KBM-7 (cell line): ENCODE measurements at regions of chr1 and their contacts with region 1.

Region 1: DNA sequence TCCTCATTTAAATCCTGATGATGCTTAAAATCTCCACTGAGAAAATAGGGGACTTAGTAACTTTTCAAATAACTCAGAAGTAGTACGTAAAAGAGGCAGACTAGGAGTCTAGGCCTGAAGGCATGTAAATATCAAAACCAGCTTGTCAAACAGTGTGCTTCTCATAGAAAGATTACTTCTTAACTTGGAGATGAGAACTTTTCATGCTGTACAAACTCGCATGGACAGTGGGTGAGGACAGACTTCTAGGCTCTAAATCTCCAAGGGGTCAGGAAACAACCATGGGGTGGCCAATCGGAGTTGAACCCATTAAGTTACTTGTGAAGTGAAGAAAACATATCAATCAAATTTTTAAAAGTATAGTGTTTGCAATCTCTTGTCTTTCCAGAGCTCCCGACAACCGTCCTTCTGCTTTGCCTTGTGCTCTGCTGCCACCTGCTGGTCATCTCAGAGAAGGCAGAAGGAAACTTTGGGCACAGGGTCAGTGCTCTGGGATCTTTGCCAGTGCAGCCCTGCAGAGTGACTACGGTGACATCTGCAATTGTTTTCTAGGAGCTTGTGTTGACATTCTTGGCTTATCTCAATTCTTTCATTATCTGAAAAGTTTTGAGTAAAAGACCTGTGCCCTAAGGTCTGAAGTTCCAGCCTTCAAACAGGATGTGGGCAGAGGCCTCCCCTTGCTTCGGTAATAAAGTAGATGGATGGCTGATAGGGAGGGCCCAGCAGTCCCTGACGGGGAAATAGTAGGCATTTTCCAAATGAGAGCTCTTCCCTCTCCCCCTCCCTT is 105.1 kb upstream of the PDE4B start:
- DNase-seq: peak; percentile 87

Region 2: GRCh38 chr1:65235867-65236805 is 451.5 kb before region 1 on chr1:
- in situ Hi-C with region 1: loop called (anchors 25 kb)
- DNase-seq: peak; percentile 77